SK-N-SH (cell line): ENCODE measurements at regions of chr6 and their contacts with region 1.

Region 1: GRCh38 chr6:3251462-3252314 is 7.1 kb upstream of the PSMG4 start:
- DNase-seq: peak; percentile 91
- H3K4me3 ChIP-seq: peak overlapping the region in 1 of 2 experiments; percentile 51; a peak in 1 of 4 replicates
- H3K27ac ChIP-seq: no peak overlapping the region
- H3K4me1 ChIP-seq: peaks cover 15 to 18% of the 10 kb centered on the region in 2 experiments
- H3K27me3 ChIP-seq: no peaks in the 10 kb centered on the region; the same call in 1 of the 2 replicates
- CTCF ChIP-seq: peak; percentile 97
- EP300 ChIP-seq: no peak; a peak in 1 of 4 replicates
- RAD21 ChIP-seq: peak; percentile 86

Region 2: DNA sequence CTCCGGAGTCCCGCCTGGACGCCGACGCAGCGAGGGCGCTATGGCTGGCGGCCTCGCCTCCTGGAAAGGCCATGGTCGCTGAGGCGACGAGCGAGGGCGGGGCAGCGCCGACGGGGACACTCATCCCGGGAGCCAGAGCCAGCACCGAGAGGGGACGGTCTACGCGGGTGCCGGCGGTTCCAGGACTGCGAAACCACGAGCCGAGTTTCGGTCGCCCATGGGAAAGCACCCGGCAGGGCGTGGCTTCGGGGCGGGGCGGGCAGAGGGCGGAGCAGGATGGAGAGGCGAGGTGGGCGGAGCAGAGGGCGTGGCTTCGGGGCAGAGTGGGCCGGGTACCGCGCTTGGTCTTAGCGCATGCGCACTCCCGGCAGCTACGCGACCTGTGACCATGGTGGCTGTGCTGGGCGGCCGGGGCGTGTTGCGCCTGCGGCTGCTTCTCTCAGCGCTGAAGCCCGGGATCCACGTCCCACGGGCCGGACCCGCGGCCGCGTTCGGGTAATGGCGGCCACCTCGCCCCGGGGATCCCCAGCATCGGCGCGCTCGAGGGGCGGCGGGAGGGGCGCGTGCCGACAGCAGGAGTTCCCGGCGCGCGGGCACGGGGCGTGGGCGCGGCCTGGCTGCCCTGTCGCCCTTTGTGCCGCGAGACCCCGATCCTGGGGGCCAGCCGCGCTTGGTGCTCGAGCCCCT is 133.2 kb before region 1 on chr6 and contains the start of gene BPHL:
- CTCF ChIA-PET with region 1: interaction called, 32 read pairs
- POLR2A ChIA-PET with region 1: no interaction called
- DNase-seq: peak; percentile 100
- H3K4me3 ChIP-seq: peak within 1 kb of the TSS; percentile 84 to 87
- H3K27ac ChIP-seq: peak within 1 kb of the TSS; percentile 95 to 96
- H3K4me1 ChIP-seq: peaks cover 11 to 16% of the 10 kb centered on the region in 2 experiments; a peak in 2 of 4 replicates
- H3K27me3 ChIP-seq: no peaks in the 10 kb centered on the region
- CTCF ChIP-seq: no peak
- EP300 ChIP-seq: no peak
- RAD21 ChIP-seq: no peak
- polyA plus RNA-seq, gene BPHL: 21.7 and 25.6 TPM in 2 replicates

Region 3: GRCh38 chr6:3124667-3125066 is 127.0 kb before region 1 on chr6:
- CTCF ChIA-PET with region 1: interaction called, 32 read pairs
- POLR2A ChIA-PET with region 1: no interaction called
- DNase-seq: no peak
- H3K4me3 ChIP-seq: no peak overlapping the region
- H3K27ac ChIP-seq: no peak overlapping the region
- H3K4me1 ChIP-seq: peaks cover 0 to 6% of the 10 kb centered on the region in 2 experiments; a peak in 2 of 4 replicates
- H3K27me3 ChIP-seq: no peaks in the 10 kb centered on the region
- CTCF ChIP-seq: no peak
- EP300 ChIP-seq: no peak
- RAD21 ChIP-seq: no peak

Region 4: DNA sequence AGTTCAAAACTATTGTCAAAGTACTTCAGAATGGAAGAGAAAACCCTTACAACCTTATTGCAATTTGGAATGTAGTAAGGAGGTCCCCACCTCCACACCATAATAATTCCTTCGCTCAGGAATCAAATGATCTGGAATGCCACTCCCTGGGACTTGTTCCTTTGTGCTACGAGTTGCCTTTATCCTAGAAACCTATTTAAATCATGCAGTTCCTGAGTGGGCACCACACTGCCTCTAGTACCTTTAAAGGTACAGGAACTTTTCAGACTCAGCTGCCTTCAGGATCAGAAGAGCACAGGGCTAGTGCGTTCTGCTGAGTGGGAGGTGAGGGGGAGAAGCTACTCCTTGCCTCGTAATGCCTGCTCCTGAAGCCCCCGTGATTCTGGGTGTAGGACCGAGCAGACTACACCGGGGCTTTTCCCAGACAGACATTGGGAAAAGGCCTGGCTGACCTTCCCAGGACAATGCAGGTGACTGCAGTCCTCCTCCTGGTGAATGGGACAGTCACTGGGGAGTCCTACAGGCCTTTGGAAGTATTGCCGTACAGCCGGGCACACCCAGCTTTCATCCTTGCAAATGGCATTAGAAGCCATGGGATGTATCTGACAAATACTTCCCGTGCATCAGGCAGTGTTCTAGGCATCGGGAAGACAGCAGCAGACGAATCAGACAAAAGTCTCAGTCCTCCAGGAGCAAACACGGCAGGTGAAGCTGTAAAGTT is 12.4 kb before region 1 on chr6:
- CTCF ChIA-PET with region 1: interaction called, 63 read pairs
- POLR2A ChIA-PET with region 1: interaction called, 9 read pairs
- DNase-seq: no peak
- H3K4me3 ChIP-seq: no peak overlapping the region
- H3K27ac ChIP-seq: no peak overlapping the region
- H3K4me1 ChIP-seq: no peaks in the 10 kb centered on the region; a peak in 1 of 4 replicates
- H3K27me3 ChIP-seq: no peaks in the 10 kb centered on the region
- CTCF ChIP-seq: peak; percentile 25; the same call in 1 of the 2 replicates
- EP300 ChIP-seq: no peak
- RAD21 ChIP-seq: no peak